ENCODE measurements at regions of chr4 and their contacts with region 1.

Region 1: GRCh38 chr4:182925298-182925738 is 8.1 kb upstream of the DCTD start:
- DNase-seq: peak; percentile 81
- ATAC-seq: peak; percentile 97
- H3K4me3 Mint-ChIP-seq: no peak overlapping the region
- H3K27ac Mint-ChIP-seq: no peak overlapping the region
- H3K4me1 Mint-ChIP-seq: peaks cover 6% of the 10 kb centered on the region; the same call in 1 of the 2 replicates
- H3K27me3 Mint-ChIP-seq: no peaks in the 10 kb centered on the region
- CTCF ChIP-seq: peak; percentile 25; the same call in 1 of the 2 replicates

Region 2: DNA sequence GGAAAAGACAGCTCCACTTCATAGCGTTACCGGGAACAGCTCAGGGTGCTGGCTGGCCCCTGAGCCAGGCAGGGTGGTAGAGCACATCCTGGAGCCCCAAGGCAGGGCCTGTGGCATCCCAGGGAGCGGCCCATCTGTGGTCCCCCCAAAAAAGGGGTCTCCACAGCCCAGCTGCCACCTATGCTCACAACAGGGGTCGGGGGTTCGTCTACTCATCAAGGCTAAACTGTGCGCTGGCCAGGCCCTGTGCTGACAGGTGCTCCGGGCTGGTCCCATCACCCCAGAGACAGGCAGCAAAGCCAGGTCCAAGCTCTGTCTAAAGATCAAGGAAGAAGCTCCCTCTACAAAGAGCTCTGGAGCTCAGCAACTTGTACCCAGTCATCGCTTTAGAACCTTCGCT is 86.1 kb before region 1 on chr4:
- CTCF ChIA-PET with region 1: interaction called, 10 read pairs
- POLR2A ChIA-PET with region 1: no interaction called
- DNase-seq: no peak
- ATAC-seq: no peak
- H3K4me3 Mint-ChIP-seq: no peak overlapping the region
- H3K27ac Mint-ChIP-seq: no peak overlapping the region
- H3K4me1 Mint-ChIP-seq: peaks cover 18% of the 10 kb centered on the region
- H3K27me3 Mint-ChIP-seq: peaks cover 3% of the 10 kb centered on the region; the same call in 1 of the 2 replicates
- CTCF ChIP-seq: no peak

Region 3: DNA sequence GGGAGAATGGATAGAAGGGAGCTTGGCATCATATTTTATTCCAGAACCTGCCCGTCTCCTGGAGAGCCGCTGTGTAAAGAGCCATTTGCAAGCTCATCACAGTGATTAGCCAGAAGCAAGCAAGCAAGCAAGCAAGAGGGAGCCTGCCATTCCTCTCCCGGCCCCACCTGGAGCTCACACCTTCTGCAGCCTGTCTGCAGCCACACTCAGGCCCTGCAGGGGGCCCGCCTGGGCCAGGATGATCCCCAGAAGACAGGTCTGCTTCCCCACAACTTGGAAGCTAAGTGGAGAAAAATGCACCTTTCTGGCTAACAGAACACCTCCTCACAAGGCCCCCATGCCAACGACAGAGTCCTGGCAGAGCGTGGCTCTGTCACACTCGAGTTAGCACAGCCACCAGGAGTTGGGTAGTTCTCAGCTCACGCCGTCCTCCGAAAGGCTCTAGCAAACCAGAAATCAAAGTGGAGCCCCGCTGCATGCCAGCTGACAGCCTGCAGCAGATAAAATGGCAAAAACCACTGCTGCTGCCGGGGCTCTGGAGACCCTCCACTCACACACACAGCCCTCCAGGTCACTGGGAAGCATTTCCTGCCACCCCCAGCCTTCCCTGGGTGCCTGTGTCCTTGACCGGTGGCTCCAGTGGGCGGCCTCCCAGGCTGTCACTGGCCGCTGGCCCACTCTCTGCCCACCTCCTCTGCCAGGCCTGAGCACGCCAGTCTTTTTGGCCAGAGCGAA is 63.0 kb before region 1 on chr4:
- CTCF ChIA-PET with region 1: interaction called, 10 read pairs
- POLR2A ChIA-PET with region 1: no interaction called
- DNase-seq: peak; percentile 51
- ATAC-seq: peak; percentile 60
- H3K4me3 Mint-ChIP-seq: no peak overlapping the region
- H3K27ac Mint-ChIP-seq: no peak overlapping the region; the same call in 1 of the 2 replicates
- H3K4me1 Mint-ChIP-seq: peaks cover 50% of the 10 kb centered on the region
- H3K27me3 Mint-ChIP-seq: no peaks in the 10 kb centered on the region
- CTCF ChIP-seq: no peak

Region 4: GRCh38 chr4:182913036-182913435 is 12.3 kb before region 1 on chr4:
- CTCF ChIA-PET with region 1: interaction called, 14 read pairs
- POLR2A ChIA-PET with region 1: no interaction called
- DNase-seq: no peak
- ATAC-seq: no peak
- H3K4me3 Mint-ChIP-seq: no peak overlapping the region
- H3K27ac Mint-ChIP-seq: no peak overlapping the region
- H3K4me1 Mint-ChIP-seq: peaks cover 9% of the 10 kb centered on the region
- H3K27me3 Mint-ChIP-seq: peaks cover 1% of the 10 kb centered on the region; the same call in 1 of the 2 replicates
- CTCF ChIP-seq: no peak

Region 5: GRCh38 chr4:182938205-182938645 is 12.9 kb after region 1 on chr4:
- CTCF ChIA-PET with region 1: interaction called, 47 read pairs
- POLR2A ChIA-PET with region 1: no interaction called
- DNase-seq: peak; percentile 86
- ATAC-seq: peak; percentile 100
- H3K4me3 Mint-ChIP-seq: no peak overlapping the region
- H3K27ac Mint-ChIP-seq: no peak overlapping the region
- H3K4me1 Mint-ChIP-seq: peaks cover 16% of the 10 kb centered on the region
- H3K27me3 Mint-ChIP-seq: peaks cover 6% of the 10 kb centered on the region; the same call in 1 of the 2 replicates
- CTCF ChIP-seq: peak; percentile 86